MCF 10A (cell line): ENCODE measurements at regions of chrX and their contacts with region 1.

Region 1: DNA sequence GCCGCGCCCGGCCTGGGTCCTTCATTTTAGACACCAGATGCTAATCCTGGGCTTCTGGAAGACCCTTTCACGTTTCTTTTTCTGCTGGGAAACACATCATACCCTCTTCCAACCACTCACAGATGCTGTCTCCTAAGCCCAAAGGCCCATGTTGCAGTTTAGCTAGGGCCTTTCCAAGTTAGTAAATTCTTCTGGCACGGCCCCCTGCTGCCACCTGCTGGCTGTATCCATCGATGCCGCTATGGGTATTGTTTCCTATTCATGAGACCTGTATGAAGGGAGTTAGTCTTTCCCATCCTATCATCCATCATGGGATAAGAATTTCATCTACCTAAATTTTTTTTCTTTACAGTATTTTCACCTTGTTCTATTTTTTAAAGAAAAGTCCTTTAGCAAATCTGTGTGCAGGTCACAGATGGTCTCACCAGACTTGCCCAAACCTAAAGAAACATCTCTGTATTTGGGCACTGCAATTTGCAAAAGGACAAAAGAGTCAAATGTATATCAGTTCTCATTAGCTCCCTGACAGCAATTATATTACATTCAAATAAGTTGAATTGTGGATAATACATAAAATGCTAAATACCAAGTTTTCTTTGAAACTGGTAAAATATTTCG is 37.8 kb upstream of the SLC9A7 start:
- DNase-seq: peak; percentile 72
- H3K4me3 Mint-ChIP-seq: no peak overlapping the region
- H3K27ac Mint-ChIP-seq: no peak overlapping the region
- H3K4me1 Mint-ChIP-seq: no peaks in the 10 kb centered on the region
- H3K27me3 Mint-ChIP-seq: peaks cover 21% of the 10 kb centered on the region
- CTCF ChIP-seq: peak; percentile 80

Region 2: GRCh38 chrX:46770817-46771163 is 25.9 kb before region 1 on chrX:
- CTCF ChIA-PET with region 1: interaction called, 25 read pairs
- POLR2A ChIA-PET with region 1: interaction called, 21 read pairs
- intact Hi-C with region 1: loop called (anchors 2 kb)
- DNase-seq: peak; percentile 79
- H3K4me3 Mint-ChIP-seq: no peak overlapping the region
- H3K27ac Mint-ChIP-seq: no peak overlapping the region
- H3K4me1 Mint-ChIP-seq: peaks cover 6% of the 10 kb centered on the region
- H3K27me3 Mint-ChIP-seq: peaks cover 45% of the 10 kb centered on the region
- CTCF ChIP-seq: no peak

Region 3: GRCh38 chrX:46953597-46953996 is 156.9 kb after region 1 on chrX:
- CTCF ChIA-PET with region 1: no interaction called
- POLR2A ChIA-PET with region 1: no interaction called
- intact Hi-C with region 1: no loop called
- DNase-seq: no peak
- H3K4me3 Mint-ChIP-seq: no peak overlapping the region
- H3K27ac Mint-ChIP-seq: no peak overlapping the region
- H3K4me1 Mint-ChIP-seq: peaks cover 7% of the 10 kb centered on the region
- H3K27me3 Mint-ChIP-seq: peaks cover 42% of the 10 kb centered on the region
- CTCF ChIP-seq: no peak

Region 4: GRCh38 chrX:47047989-47048388 is 251.3 kb after region 1 on chrX:
- CTCF ChIA-PET with region 1: no interaction called
- POLR2A ChIA-PET with region 1: no interaction called
- intact Hi-C with region 1: no loop called
- DNase-seq: no peak
- H3K4me3 Mint-ChIP-seq: no peak overlapping the region
- H3K27ac Mint-ChIP-seq: no peak overlapping the region
- H3K4me1 Mint-ChIP-seq: no peaks in the 10 kb centered on the region
- H3K27me3 Mint-ChIP-seq: peaks cover 37% of the 10 kb centered on the region
- CTCF ChIP-seq: no peak

Region 5: GRCh38 chrX:47093248-47093647 is 296.6 kb after region 1 on chrX:
- CTCF ChIA-PET with region 1: no interaction called
- POLR2A ChIA-PET with region 1: no interaction called
- intact Hi-C with region 1: loop called (anchors 1 kb)
- DNase-seq: peak; percentile 47
- H3K4me3 Mint-ChIP-seq: no peak overlapping the region
- H3K27ac Mint-ChIP-seq: no peak overlapping the region
- H3K4me1 Mint-ChIP-seq: no peaks in the 10 kb centered on the region
- H3K27me3 Mint-ChIP-seq: peaks cover 88% of the 10 kb centered on the region
- CTCF ChIP-seq: no peak